K562 (cell line): ENCODE measurements at regions of chr1 and their contacts with region 1.

Region 1: GRCh38 chr1:184030433-184031091 is 7.0 kb downstream of the COLGALT2 start:
- DNase-seq: no peak
- ATAC-seq: no peak
- H3K4me3 ChIP-seq: no peak overlapping the region
- H3K27ac ChIP-seq: peak overlapping the region; percentile 89
- H3K4me1 ChIP-seq: peaks cover 15 to 81% of the 10 kb centered on the region in 2 experiments
- H3K27me3 ChIP-seq: no peaks in the 10 kb centered on the region
- CTCF ChIP-seq: no peak
- EP300 ChIP-seq: no peak
- POLR2A ChIP-seq: no peak; the same call in 1 of the 2 replicates
- RAD21 ChIP-seq: no peak; a peak in 1 of 4 replicates

Region 2: DNA sequence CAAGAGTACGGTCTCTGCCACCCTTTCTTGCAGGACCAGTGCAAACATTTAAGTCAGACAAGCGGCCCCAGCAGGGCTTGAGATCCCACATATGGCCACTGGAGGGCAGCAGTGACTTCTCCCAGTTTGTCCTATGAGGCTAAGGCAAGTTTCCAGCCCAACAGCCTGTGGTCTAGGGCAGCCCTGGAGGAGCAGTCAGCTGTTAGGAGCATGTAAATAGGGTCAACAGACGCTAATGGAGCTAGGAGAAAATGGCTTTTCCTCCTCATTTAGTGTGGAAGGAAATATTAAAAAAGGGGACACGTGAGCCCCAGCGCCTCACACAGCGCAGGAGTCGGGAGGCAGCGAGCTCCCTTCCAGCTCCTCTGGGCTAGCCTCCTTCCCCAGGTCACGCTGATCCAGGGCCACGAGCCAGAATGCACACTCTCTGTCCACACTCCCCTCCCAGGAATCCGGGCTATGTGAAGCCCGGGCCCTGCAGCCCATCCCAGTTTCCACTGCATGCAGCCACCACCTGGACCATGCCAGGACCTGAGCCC is 748.9 kb before region 1 on chr1:
- CTCF ChIA-PET with region 1: no interaction called
- POLR2A ChIA-PET with region 1: no interaction called
- in situ Hi-C with region 1: no loop called
- intact Hi-C with region 1: no loop called
- DNase-seq: peak; percentile 79 to 85 (median 82)
- ATAC-seq: peak; percentile 98
- H3K4me3 ChIP-seq: no peak overlapping the region
- H3K27ac ChIP-seq: no peak overlapping the region
- H3K4me1 ChIP-seq: no peaks in the 10 kb centered on the region
- H3K27me3 ChIP-seq: peaks cover 19 to 55% of the 10 kb centered on the region in 2 experiments; a peak in 4 of 5 replicates
- CTCF ChIP-seq: peak; percentile 84 to 93 (median 92)
- EP300 ChIP-seq: no peak
- POLR2A ChIP-seq: no peak
- RAD21 ChIP-seq: peak; percentile 82 to 86

Region 3: DNA sequence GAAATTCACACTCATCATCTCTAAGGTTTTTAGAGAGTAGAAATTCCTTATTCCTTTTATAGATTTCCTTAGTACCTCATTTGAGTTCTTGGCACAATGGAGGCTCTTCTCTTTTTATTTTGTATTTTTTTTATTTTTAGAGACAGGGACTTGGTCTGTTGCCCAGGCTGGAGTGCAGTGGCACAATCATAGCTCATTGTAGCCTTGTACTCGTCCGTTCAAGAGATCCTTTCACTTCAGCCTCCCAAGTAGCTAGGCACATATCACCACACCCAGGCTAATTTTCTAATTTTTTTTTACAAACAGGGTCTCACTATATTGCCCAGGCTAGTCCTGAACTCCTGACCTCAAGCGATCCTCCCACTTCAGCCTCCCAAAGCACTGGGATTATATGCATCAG is 196.0 kb before region 1 on chr1:
- CTCF ChIA-PET with region 1: no interaction called
- POLR2A ChIA-PET with region 1: no interaction called
- in situ Hi-C with region 1: no loop called
- intact Hi-C with region 1: no loop called
- DNase-seq: no peak
- ATAC-seq: no peak
- H3K4me3 ChIP-seq: no peak overlapping the region
- H3K27ac ChIP-seq: no peak overlapping the region
- H3K4me1 ChIP-seq: no peaks in the 10 kb centered on the region
- H3K27me3 ChIP-seq: peaks cover 3 to 4% of the 10 kb centered on the region in 2 experiments; a peak in 2 of 5 replicates
- CTCF ChIP-seq: no peak
- EP300 ChIP-seq: no peak
- POLR2A ChIP-seq: no peak
- RAD21 ChIP-seq: no peak

Region 4: GRCh38 chr1:183956559-183957188 is 73.9 kb before region 1 on chr1:
- CTCF ChIA-PET with region 1: no interaction called
- POLR2A ChIA-PET with region 1: no interaction called
- in situ Hi-C with region 1: no loop called
- intact Hi-C with region 1: loop called (anchors 2 kb)
- DNase-seq: peak in 2 of 4 experiments; percentile 69 to 71
- ATAC-seq: peak; percentile 94
- H3K4me3 ChIP-seq: no peak overlapping the region
- H3K27ac ChIP-seq: peak overlapping the region; percentile 38; the same call in 1 of the 3 replicates
- H3K4me1 ChIP-seq: peaks cover 0 to 14% of the 10 kb centered on the region in 2 experiments; a peak in 3 of 5 replicates
- H3K27me3 ChIP-seq: no peaks in the 10 kb centered on the region
- CTCF ChIP-seq: peak; percentile 46 to 74 (median 57); a peak in 5 of 6 replicates
- EP300 ChIP-seq: peak; percentile 36; the same call in 1 of the 2 replicates
- POLR2A ChIP-seq: no peak
- RAD21 ChIP-seq: peak; percentile 78 to 79

Region 5: DNA sequence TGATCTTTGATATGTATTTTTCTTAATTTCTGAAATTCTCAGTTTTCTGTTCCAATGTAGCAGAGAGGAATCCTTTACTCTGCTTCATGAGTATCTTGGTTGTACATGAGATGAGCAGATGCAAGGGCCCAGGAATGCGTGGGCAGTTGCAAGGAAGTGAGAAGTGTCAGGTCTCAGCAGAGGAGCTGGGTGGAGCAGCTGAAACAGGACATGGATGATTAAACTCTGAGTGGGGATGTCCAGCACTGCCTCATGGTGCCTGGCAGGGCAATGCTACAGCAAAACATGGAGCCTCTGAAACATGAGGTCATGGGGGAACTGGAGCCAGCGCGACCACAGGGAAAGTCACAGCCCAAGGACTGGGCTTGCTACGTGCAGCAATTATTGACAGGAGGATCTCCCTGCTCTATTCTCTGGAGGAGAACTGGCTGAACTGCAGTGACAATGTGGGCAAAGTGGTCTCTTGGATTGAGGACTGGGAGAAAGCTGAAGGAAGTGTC is 41.4 kb before region 1 on chr1:
- CTCF ChIA-PET with region 1: no interaction called
- POLR2A ChIA-PET with region 1: interaction called, 3 read pairs
- in situ Hi-C with region 1: no loop called
- intact Hi-C with region 1: loop called (anchors 1 kb)
- DNase-seq: peak; percentile 58 to 91 (median 71)
- ATAC-seq: peak; percentile 83
- H3K4me3 ChIP-seq: no peak overlapping the region
- H3K27ac ChIP-seq: peak overlapping the region; percentile 67; the same call in 2 of the 3 replicates
- H3K4me1 ChIP-seq: peaks cover 7 to 68% of the 10 kb centered on the region in 2 experiments
- H3K27me3 ChIP-seq: no peaks in the 10 kb centered on the region
- CTCF ChIP-seq: no peak
- EP300 ChIP-seq: peak; percentile 77
- POLR2A ChIP-seq: no peak
- RAD21 ChIP-seq: peak in 1 of 2 experiments; percentile 34; a peak in 2 of 4 replicates

Region 6: GRCh38 chr1:184041731-184042130 is 11.2 kb after region 1 on chr1:
- CTCF ChIA-PET with region 1: no interaction called
- POLR2A ChIA-PET with region 1: interaction called, 10 read pairs
- in situ Hi-C with region 1: no loop called
- intact Hi-C with region 1: no loop called
- DNase-seq: no peak
- ATAC-seq: no peak
- H3K4me3 ChIP-seq: no peak overlapping the region
- H3K27ac ChIP-seq: no peak overlapping the region
- H3K4me1 ChIP-seq: peaks cover 9 to 17% of the 10 kb centered on the region in 2 experiments
- H3K27me3 ChIP-seq: no peaks in the 10 kb centered on the region
- CTCF ChIP-seq: no peak
- EP300 ChIP-seq: no peak
- POLR2A ChIP-seq: no peak
- RAD21 ChIP-seq: no peak

Region 7: GRCh38 chr1:184051485-184052193 is 21.1 kb after region 1 on chr1 and contains the start of gene TSEN15:
- CTCF ChIA-PET with region 1: no interaction called
- POLR2A ChIA-PET with region 1: interaction called, 21 read pairs
- in situ Hi-C with region 1: no loop called
- intact Hi-C with region 1: loop called (anchors 1 kb)
- DNase-seq: peak; percentile 78 to 92 (median 84)
- ATAC-seq: peak; percentile 94
- H3K4me3 ChIP-seq: peak within 1 kb of the TSS; percentile 75
- H3K27ac ChIP-seq: peak within 1 kb of the TSS; percentile 98
- H3K4me1 ChIP-seq: peaks cover 0 to 21% of the 10 kb centered on the region in 2 experiments; a peak in 4 of 5 replicates
- H3K27me3 ChIP-seq: no peaks in the 10 kb centered on the region
- CTCF ChIP-seq: 0 out of 6 replicates have a peak, but pooled peaks of 1 of the 3 experiments have one; percentile 1
- EP300 ChIP-seq: peak; percentile 78
- POLR2A ChIP-seq: peak; percentile 95
- RAD21 ChIP-seq: peak; percentile 29 to 37
- polyA plus RNA-seq, gene TSEN15: 25.6 to 36.1 TPM

Region 8: DNA sequence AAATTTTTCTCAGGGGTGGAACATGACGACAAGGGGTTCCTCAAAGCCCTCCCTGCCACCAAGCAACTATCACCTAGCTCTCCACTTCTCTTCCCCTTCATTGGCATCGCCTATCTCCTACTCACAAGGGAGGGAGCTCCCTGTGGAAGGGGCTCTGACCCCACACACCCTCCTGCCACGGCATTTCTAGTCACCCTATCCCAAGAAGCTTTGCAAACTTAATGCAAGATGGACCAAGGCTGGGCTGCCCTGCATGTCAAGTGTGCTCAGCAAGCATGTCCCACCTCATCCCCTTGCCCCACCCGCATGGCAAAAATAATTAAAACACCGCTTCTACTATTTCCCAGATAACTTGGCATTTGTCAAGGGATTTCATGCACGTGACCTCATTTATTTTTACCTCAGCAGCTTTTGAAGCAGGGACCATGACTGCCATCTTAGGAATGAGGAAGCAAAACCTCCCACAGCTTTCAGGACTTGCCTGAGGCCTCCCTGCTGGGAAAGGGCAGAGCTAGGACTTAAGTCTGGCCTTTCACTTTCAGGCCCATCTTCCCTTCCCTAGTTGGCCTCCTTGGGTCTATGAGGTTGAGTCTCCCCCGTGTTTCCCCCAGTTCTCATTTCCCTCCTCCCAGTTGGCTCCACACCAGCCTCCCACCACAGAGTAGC is 182.2 kb after region 1 on chr1:
- CTCF ChIA-PET with region 1: no interaction called
- POLR2A ChIA-PET with region 1: no interaction called
- in situ Hi-C with region 1: no loop called
- intact Hi-C with region 1: no loop called
- DNase-seq: no peak
- ATAC-seq: no peak; the same call in 2 of the 3 replicates
- H3K4me3 ChIP-seq: no peak overlapping the region
- H3K27ac ChIP-seq: no peak overlapping the region
- H3K4me1 ChIP-seq: no peaks in the 10 kb centered on the region
- H3K27me3 ChIP-seq: peaks cover 2 to 26% of the 10 kb centered on the region in 2 experiments; a peak in 2 of 5 replicates
- CTCF ChIP-seq: no peak
- EP300 ChIP-seq: no peak
- POLR2A ChIP-seq: no peak
- RAD21 ChIP-seq: no peak